Heart right ventricle (tissue), 16 donors: ENCODE measurements at regions of chr6 and their contacts with region 1.

Region 1: GRCh38 chr6:34248727-34249551 is at the start of gene SMIM29:
- DNase-seq: peak; percentile 97
- ATAC-seq: peak; percentile 89 to 97 (median 94)
- H3K4me3 ChIP-seq: peak within 1 kb of the TSS; percentile 60 to 96 (median 86)
- H3K27ac ChIP-seq: peak within 1 kb of the TSS; percentile 68 to 98 (median 95)
- H3K4me1 ChIP-seq: peaks cover 9 to 39% (median 28%) of the 10 kb centered on the region in 9 donors
- H3K27me3 ChIP-seq: no peaks in the 10 kb centered on the region
- CTCF ChIP-seq: peak; percentile 91 to 100 (median 97)
- total RNA-seq, gene SMIM29: 16.0 to 29.1 (median 24.2) TPM

Region 2: DNA sequence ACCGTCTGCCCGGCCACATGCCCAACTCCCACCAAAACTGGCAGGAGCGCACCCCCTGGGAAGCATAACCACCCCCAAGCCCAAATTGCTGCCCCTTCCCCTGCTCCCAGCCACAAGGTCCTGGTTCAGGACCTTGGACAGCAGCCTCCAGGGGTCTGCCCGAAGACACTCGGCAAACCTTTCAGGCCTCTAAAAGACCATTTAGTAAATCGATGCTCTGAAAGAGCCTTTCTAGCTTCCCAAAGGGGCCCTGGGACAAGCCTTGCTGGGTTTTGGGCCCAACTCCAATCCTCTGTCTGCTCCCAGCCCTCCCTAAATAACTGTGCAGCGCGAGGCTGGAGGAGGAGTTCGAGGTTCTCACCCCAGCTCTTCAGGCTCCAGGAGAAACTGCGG is 133.5 kb before region 1 on chr6:
- intact Hi-C with region 1: no loop called
- DNase-seq: peak in 1 of 2 donors; percentile 9
- ATAC-seq: no peak
- H3K4me3 ChIP-seq: no peak overlapping the region
- H3K27ac ChIP-seq: no peak overlapping the region
- H3K4me1 ChIP-seq: no peaks in the 10 kb centered on the region
- H3K27me3 ChIP-seq: peaks cover 0 to 71% (median 37%) of the 10 kb centered on the region in 7 donors
- CTCF ChIP-seq: no peak

Region 3: GRCh38 chr6:34161857-34162515 is 87.0 kb before region 1 on chr6:
- intact Hi-C with region 1: no loop called
- DNase-seq: no peak
- ATAC-seq: peak in 1 of 8 donors; percentile 40
- H3K4me3 ChIP-seq: no peak overlapping the region
- H3K27ac ChIP-seq: no peak overlapping the region
- H3K4me1 ChIP-seq: no peaks in the 10 kb centered on the region
- H3K27me3 ChIP-seq: no peaks in the 10 kb centered on the region
- CTCF ChIP-seq: no peak

Region 4: DNA sequence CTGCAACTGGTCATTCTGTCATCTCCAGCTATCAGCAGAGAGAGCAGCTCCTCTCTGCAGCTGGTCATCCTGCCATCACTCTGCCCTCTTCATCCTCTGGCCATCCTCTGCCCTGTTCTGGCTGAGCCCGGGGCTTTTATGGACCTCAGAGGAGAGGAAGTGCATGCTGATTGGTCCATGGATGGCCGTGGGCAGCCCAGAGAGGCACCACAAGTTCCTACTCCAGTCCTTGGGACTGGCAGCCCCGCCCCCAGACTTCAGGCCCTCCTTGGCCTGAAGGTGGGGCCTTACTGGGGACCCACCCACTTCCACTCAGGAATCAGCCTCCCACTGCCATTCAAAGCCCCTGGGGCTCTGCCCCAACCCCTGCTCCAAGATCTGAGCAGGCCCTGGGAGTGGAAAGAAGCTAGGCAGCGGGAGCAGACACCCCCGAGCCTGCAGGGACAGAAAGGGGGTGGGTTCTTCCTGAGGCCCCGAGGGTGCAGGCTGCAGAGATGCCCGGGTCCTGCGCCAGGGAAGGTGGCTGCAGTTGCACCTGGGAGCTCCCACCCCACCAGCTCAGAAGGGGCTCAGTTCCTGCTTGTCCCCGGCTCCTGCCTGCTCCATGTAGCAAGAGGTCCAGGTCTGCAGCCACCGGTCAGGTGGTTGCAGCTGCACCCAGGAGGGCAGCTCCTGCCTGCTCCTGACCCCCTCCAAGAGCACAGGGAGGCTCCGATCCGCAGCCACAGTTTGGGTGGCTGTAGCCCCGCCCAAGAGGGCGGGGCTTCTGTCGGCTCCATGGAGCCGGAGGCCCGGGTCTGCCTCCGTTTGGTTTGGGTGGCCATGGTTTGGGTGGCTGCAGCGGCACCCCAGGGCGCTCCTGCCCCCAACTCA is 46.4 kb before region 1 on chr6:
- intact Hi-C with region 1: loop called in 7 of 10 experiments (anchors 2 to 5 kb)
- DNase-seq: no peak
- ATAC-seq: no peak
- H3K4me3 ChIP-seq: no peak overlapping the region
- H3K27ac ChIP-seq: no peak overlapping the region
- H3K4me1 ChIP-seq: no peaks in the 10 kb centered on the region
- H3K27me3 ChIP-seq: peaks cover 0 to 3% (median 0%) of the 10 kb centered on the region in 7 donors
- CTCF ChIP-seq: no peak

Region 5: GRCh38 chr6:34301408-34301807 is 52.5 kb after region 1 on chr6:
- intact Hi-C with region 1: loop called in 1 of 10 experiments (anchors 10 kb)
- DNase-seq: peak; percentile 39 to 88
- ATAC-seq: peak; percentile 88 to 96 (median 92)
- H3K4me3 ChIP-seq: no peak overlapping the region
- H3K27ac ChIP-seq: peak overlapping the region; percentile 24 to 85 (median 55)
- H3K4me1 ChIP-seq: peaks cover 5 to 98% (median 76%) of the 10 kb centered on the region in 9 donors
- H3K27me3 ChIP-seq: no peaks in the 10 kb centered on the region
- CTCF ChIP-seq: no peak

Region 6: GRCh38 chr6:34414999-34415858 is 166.3 kb after region 1 on chr6:
- intact Hi-C with region 1: loop called (anchors 1 to 5 kb)
- DNase-seq: peak in 1 of 2 donors; percentile 75
- ATAC-seq: peak; percentile 80 to 95 (median 92)
- H3K4me3 ChIP-seq: no peak overlapping the region
- H3K27ac ChIP-seq: peak overlapping the region in 9 of 10 donors; percentile 13 to 70 (median 54)
- H3K4me1 ChIP-seq: peaks cover 0 to 18% (median 9%) of the 10 kb centered on the region in 9 donors
- H3K27me3 ChIP-seq: no peaks in the 10 kb centered on the region
- CTCF ChIP-seq: peak; percentile 61 to 89 (median 76)

Region 7: DNA sequence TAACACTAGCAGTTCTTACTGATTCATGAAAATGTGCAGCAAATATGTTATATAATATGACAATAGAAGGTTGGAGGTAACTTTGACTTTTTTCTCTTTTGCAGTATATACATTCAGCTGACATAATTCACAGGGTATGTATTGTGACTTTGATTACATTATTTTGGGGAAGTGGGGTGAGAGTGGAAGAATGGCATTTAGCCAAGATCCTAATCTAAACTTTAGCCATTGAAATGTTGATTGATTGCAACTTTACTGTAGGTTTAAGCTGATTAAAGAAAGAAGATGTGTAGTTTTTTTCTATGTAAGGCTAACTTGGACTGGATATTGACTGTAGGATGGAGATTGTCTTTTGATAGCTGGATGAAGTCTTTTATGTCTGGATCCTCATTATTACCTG is 1824.6 kb after region 1 on chr6:
- intact Hi-C with region 1: loop called in 1 of 10 experiments (anchors 5 kb)
- DNase-seq: no peak
- ATAC-seq: no peak
- H3K4me3 ChIP-seq: no peak overlapping the region
- H3K27ac ChIP-seq: no peak overlapping the region
- H3K4me1 ChIP-seq: peaks cover 0 to 31% (median 8%) of the 10 kb centered on the region in 9 donors
- H3K27me3 ChIP-seq: no peaks in the 10 kb centered on the region
- CTCF ChIP-seq: no peak